Prostate gland (tissue), 2 donors: ENCODE measurements at regions of chr1 and their contacts with region 1.

Region 1: DNA sequence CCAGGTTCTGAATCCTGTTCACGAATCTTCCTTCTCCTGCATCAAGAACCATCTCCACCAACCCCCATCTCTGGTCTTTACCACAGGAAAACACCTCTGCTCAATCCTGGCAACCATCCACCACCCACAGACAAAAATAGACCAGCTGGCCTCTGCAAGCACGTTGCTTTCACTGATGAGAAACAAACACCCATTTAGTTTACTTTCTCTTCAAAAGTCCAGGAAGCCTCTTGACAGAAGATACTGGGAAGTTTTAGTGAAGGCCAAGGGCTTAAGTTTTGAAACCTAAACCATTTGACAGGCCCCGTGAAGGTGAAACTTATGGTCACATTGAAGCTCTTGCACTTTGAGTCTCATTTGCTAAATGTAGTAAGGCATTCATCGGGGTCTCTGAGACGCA is 122.6 kb upstream of the PPP2R5A start:
- DNase-seq: peak; percentile 11
- H3K4me3 ChIP-seq: no peak overlapping the region
- H3K27ac ChIP-seq: no peak overlapping the region
- H3K4me1 ChIP-seq: no peaks in the 10 kb centered on the region
- H3K27me3 ChIP-seq: no peaks in the 10 kb centered on the region
- CTCF ChIP-seq: no peak
- POLR2A ChIP-seq: no peak

Region 2: DNA sequence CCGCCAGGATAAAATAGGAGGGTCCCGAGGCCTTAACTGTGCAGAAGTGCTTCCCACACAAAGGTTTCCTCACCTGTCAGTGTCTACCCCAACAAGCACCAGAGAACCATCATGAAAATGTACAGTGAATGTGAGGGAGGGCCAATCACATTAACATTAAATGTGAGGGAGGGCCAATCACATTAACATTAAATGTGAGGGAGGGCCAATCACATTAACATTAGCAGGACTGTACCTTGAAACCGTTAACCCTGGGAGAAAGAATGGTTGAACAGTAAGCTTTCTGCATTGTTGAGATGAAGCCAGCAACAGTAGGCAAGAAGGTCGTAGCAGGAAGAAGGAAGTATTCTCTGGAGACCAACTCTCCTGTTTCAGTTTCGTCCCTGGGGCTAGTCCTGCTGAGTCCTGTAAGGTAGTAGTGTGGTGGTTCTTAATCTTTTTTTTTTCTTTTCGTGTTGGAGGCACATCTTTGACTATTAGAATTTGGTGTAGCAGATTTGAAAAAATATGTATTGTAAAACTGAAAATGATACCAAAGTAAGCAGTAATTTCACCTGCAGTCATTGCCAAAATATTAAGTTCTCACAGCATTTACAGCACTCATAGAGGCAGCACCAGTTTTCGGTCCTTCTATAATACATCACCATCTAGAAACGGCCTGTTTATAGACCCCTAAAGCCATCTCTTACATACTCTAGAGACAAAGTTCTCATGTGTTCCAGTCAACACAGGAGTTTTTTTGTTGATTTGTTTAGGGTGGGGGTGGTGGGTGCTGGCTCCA is 24.0 kb after region 1 on chr1:
- intact Hi-C with region 1: no loop called
- DNase-seq: no peak
- H3K4me3 ChIP-seq: no peak overlapping the region
- H3K27ac ChIP-seq: no peak overlapping the region
- H3K4me1 ChIP-seq: no peaks in the 10 kb centered on the region
- H3K27me3 ChIP-seq: no peaks in the 10 kb centered on the region
- CTCF ChIP-seq: no peak
- POLR2A ChIP-seq: no peak

Region 3: GRCh38 chr1:212229654-212230053 is 67.0 kb after region 1 on chr1:
- intact Hi-C with region 1: loop called (anchors 5 kb)
- DNase-seq: no peak
- H3K4me3 ChIP-seq: no peak overlapping the region
- H3K27ac ChIP-seq: no peak overlapping the region
- H3K4me1 ChIP-seq: no peaks in the 10 kb centered on the region
- H3K27me3 ChIP-seq: no peaks in the 10 kb centered on the region
- CTCF ChIP-seq: no peak
- POLR2A ChIP-seq: no peak

Region 4: DNA sequence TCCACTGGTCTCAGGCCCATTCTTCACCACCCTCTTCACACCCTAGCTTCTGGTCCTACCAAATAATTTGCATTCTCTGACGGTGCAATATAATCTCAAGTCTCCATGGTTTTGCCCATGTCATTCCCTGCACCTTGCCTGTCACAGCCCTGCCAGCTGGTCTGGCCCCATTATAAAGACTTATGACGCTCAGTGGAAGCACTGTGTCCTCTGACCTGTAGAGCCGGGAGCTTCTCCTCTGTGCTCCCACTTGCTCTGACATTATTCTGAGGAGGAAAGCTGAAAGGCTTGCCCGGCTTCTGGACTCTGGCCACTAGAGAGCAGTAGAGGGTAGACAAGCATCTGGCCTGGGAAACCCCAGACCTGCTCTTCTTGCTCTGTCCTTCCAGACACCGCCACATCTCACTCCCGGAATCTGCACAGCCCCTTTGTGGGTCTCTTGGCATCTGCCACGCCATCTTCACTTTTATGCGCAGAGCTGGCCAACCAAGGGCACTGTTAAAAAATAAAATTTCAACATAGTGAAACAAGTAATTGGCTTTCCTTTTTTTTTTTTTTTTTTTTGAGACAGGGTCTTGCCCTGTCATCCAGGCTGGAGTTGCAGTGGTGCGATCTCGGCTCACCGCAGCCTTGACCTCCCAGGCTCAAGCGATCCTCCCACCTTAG is 314.5 kb after region 1 on chr1:
- intact Hi-C with region 1: no loop called
- DNase-seq: peak; percentile 79
- H3K4me3 ChIP-seq: no peak overlapping the region
- H3K27ac ChIP-seq: no peak overlapping the region
- H3K4me1 ChIP-seq: no peaks in the 10 kb centered on the region
- H3K27me3 ChIP-seq: no peaks in the 10 kb centered on the region
- CTCF ChIP-seq: peak; percentile 64 to 88 (median 74)
- POLR2A ChIP-seq: no peak